ENCODE measurements at regions of chr11 and their contacts with region 1.

Region 1: GRCh38 chr11:61899146-61899841 is 7.9 kb upstream of the FADS3 start:
- DNase-seq: peak; percentile 95
- CTCF ChIP-seq: peak; percentile 100

Region 2: DNA sequence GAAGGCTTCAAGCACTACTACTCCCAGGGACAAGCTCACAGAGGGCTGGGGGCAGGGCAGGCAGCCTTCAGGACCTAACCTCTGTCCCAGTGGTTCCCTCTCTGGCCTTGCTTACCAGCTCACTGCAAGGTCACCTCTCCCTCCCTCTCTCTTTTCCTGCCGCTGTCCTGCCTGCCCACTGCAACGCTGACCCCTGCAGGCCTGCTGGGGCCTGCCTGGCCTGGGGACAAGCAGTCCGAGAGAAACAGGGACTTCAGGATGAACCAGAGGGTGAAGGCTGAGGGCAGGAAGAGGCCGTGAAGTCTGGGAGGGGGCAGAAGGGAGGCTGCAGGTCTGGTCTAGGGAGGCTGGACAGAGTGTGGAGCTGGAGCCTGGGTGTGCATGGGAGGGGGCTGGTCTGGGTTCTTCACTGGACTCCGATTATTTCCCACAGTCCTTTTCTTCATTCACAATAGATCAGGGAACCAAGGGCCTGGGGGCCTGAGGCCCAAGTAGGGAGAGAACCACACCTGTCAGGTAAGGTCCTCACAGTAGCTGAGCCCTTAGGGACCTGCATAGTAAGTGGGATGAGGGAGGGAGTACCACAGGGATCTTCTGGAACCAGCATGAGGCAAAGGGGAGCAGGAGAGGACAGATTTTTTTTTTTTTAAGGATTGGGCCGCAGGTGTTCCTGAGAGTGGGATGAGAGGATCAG is 321.4 kb before region 1 on chr11:
- CTCF ChIA-PET with region 1: no interaction called
- POLR2A ChIA-PET with region 1: no interaction called
- DNase-seq: no peak
- CTCF ChIP-seq: no peak

Region 3: GRCh38 chr11:61695917-61696316 is 203.4 kb before region 1 on chr11:
- CTCF ChIA-PET with region 1: no interaction called
- POLR2A ChIA-PET with region 1: no interaction called
- DNase-seq: peak; percentile 76
- CTCF ChIP-seq: no peak

Region 4: GRCh38 chr11:61871158-61871597 is 28.1 kb before region 1 on chr11:
- CTCF ChIA-PET with region 1: interaction called, 92 read pairs
- POLR2A ChIA-PET with region 1: no interaction called
- DNase-seq: peak; percentile 87
- CTCF ChIP-seq: peak; percentile 93

Region 5: DNA sequence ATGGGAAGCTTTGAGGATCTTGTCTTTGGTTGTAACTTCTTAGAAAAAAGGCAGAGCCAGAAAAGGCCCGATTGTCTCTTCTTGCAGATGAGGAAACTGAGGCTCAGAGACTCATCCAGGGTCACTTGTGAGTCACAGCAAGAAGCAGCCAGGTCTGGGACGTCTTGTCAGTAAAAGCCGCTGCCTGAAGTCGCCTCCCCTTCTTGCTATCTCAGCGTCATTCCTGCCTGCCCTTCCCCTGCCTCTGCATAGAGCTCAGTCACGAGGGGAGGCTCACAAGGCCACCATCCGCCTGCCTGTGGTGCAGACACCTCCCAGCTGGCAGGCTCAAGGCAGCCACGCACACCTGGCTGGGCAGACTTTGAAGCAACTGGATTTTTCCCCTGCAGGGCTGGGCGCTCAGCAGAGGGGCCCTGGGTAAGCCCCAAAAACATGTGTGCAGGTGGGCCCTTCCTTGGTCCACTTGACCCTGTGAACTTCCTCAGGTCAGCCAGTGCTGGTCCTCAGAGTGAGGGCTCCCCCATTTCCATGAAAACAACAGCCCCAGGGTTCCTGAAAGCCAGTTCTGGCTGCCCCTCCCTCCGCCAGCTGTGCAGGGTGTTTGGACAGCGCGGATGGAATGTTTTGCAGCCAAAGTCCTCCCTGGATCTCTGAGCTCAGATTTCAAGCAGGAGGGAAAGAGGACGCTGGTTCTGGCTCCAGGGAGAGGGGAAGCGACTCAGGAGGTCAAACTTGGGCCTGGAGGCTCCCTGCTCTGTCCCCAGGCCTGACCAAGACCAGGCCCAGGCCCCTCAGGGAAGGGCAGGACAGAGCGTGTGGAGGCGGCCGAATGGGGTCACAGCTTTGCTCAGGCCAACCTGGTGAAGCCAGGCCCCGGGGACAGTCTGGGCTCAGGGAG is 24.1 kb after region 1 on chr11:
- CTCF ChIA-PET with region 1: interaction called, 23 read pairs
- POLR2A ChIA-PET with region 1: no interaction called
- DNase-seq: peak; percentile 15
- CTCF ChIP-seq: no peak

Region 6: GRCh38 chr11:61947486-61948210 is 48.4 kb after region 1 on chr11:
- CTCF ChIA-PET with region 1: interaction called, 173 read pairs
- POLR2A ChIA-PET with region 1: no interaction called
- DNase-seq: peak; percentile 87
- CTCF ChIP-seq: peak; percentile 94

Region 7: DNA sequence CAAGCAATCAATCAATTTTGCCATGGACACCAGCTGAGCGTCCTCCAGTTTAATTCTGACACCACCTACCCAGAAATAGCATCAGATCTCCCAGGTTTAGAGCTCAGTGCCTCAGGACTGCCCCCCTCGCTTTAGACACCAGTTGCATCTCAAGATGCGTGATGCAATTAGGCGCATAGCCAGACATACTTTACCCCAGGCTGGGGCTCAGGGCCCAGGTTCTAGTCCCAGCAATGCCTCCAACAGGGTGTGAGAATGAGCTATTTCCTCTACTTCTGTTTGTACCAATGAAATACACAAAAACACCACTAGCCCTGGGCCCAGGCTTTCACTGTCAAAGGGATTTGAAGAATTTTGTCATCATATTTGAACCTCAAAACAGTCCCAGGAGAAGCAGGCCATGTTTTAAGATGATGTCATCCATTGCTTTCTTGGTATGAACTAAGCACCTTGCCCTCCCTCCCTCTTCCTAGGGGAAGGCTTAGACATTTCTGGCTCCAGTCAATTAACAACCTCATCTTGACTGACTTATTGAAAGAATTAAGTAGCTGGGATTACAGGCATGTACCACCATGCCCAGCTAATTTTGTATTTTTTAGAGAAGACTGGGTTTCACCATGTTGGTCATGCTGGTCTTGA is 163.0 kb after region 1 on chr11:
- CTCF ChIA-PET with region 1: interaction called, 10 read pairs
- POLR2A ChIA-PET with region 1: no interaction called
- DNase-seq: no peak
- CTCF ChIP-seq: no peak

Region 8: GRCh38 chr11:62245271-62245753 is 346.0 kb after region 1 on chr11:
- CTCF ChIA-PET with region 1: no interaction called
- POLR2A ChIA-PET with region 1: no interaction called
- DNase-seq: peak; percentile 30
- CTCF ChIP-seq: no peak

Measured in GM10248 (cell line).